K562 (cell line): ENCODE measurements at regions of chr12 and their contacts with region 1.

Region 1: DNA sequence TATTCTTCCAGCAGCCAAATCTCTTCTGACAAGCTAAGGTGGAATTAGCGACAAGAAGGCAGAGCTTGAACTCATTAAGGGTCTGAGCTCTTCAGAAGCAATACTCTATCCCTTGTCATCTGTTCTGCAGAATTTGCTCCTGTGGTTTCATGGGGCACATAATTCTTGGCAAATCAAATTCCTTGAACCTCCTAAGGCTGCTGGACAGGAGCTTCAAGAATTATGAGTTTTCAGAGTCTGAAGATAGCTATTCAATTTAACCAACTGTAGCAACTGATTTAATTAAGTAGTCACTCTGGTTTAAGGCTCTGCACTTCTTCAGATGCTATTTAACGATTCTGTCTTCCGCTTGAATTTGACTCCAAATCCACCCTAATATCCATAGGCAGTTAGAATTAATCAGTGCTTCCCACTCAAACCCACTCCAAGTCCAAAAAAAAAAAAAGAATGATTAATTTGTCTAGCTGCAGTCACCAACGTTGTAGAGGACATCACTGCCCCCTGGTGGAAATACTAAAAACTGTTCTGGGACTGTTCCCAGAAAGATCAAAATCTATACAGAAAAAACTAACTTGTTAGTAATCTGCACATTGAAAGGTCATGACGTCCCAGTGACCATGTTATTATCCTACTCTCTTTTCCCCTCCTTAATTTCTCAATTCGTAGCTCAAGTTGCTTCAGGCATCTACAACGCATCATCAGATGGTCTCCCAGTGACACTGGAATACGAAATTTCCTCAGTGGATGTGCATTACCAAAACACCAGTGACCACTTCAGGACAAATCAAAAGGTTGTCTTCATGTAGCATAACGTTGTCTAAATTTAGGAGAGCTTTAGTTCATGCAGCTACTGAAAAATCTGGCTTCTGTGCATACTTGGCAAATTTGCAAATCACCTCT is 169.8 kb downstream of the KIF21A start:
- DNase-seq: peak; percentile 28 to 59 (median 49)
- ATAC-seq: peak; percentile 81
- H3K4me3 ChIP-seq: no peak overlapping the region
- H3K27ac ChIP-seq: no peak overlapping the region
- H3K4me1 ChIP-seq: no peaks in the 10 kb centered on the region
- H3K27me3 ChIP-seq: no peaks in the 10 kb centered on the region; a peak in 1 of 5 replicates
- CTCF ChIP-seq: peak; percentile 50 to 82 (median 63); a peak in 5 of 6 replicates
- EP300 ChIP-seq: no peak
- POLR2A ChIP-seq: no peak
- RAD21 ChIP-seq: peak; percentile 41 to 67; a peak in 3 of 4 replicates

Region 2: GRCh38 chr12:38138225-38139221 is 1134.6 kb before region 1 on chr12:
- CTCF ChIA-PET with region 1: interaction called, 4 read pairs
- POLR2A ChIA-PET with region 1: no interaction called
- in situ Hi-C with region 1: loop called (anchors 10 kb)
- intact Hi-C with region 1: no loop called
- DNase-seq: peak; percentile 49 to 63 (median 53)
- ATAC-seq: peak; percentile 81
- H3K4me3 ChIP-seq: no peak overlapping the region
- H3K27ac ChIP-seq: no peak overlapping the region
- H3K4me1 ChIP-seq: peaks cover 0 to 4% of the 10 kb centered on the region in 2 experiments; a peak in 2 of 5 replicates
- H3K27me3 ChIP-seq: no peaks in the 10 kb centered on the region
- CTCF ChIP-seq: peak; percentile 57 to 90 (median 88)
- EP300 ChIP-seq: no peak
- POLR2A ChIP-seq: no peak
- RAD21 ChIP-seq: peak; percentile 42 to 73; a peak in 3 of 4 replicates

Region 3: GRCh38 chr12:38159591-38160317 is 1113.4 kb before region 1 on chr12:
- CTCF ChIA-PET with region 1: no interaction called
- POLR2A ChIA-PET with region 1: interaction called, 3 read pairs
- in situ Hi-C with region 1: no loop called
- intact Hi-C with region 1: loop called (anchors 5 kb)
- DNase-seq: no peak
- ATAC-seq: no peak
- H3K4me3 ChIP-seq: no peak overlapping the region
- H3K27ac ChIP-seq: no peak overlapping the region
- H3K4me1 ChIP-seq: peaks cover 0 to 33% of the 10 kb centered on the region in 2 experiments; a peak in 2 of 5 replicates
- H3K27me3 ChIP-seq: peaks cover 8 to 66% of the 10 kb centered on the region in 2 experiments; a peak in 3 of 5 replicates
- CTCF ChIP-seq: no peak
- EP300 ChIP-seq: no peak
- POLR2A ChIP-seq: no peak
- RAD21 ChIP-seq: no peak

Region 4: GRCh38 chr12:38324896-38325295 is 948.2 kb before region 1 on chr12:
- CTCF ChIA-PET with region 1: interaction called, 6 read pairs
- POLR2A ChIA-PET with region 1: no interaction called
- in situ Hi-C with region 1: loop called (anchors 25 kb)
- intact Hi-C with region 1: loop called (anchors 5 kb)
- DNase-seq: no peak
- ATAC-seq: no peak
- H3K4me3 ChIP-seq: no peak overlapping the region
- H3K27ac ChIP-seq: no peak overlapping the region
- H3K4me1 ChIP-seq: no peaks in the 10 kb centered on the region
- H3K27me3 ChIP-seq: no peaks in the 10 kb centered on the region
- CTCF ChIP-seq: no peak
- EP300 ChIP-seq: no peak
- POLR2A ChIP-seq: no peak
- RAD21 ChIP-seq: no peak

Region 5: DNA sequence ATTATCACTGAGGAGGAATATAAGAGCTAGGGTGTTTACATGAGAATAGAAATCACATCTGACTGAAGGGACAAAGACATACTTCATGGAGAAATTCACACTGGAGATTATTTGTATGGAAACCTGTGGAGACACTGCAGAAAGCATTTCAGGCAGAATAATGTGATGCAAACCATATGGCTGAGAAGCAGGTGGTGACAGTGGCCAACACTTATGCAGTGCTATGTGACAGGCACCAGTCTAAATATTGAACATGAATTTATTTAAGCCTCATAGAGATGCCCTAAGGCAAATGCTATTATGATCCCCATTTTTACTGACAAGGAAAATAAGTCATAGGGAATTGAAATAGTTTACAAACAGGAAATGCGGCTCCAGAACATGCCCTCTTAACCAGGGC is 940.3 kb before region 1 on chr12:
- CTCF ChIA-PET with region 1: interaction called, 6 read pairs
- POLR2A ChIA-PET with region 1: no interaction called
- in situ Hi-C with region 1: loop called (anchors 25 kb)
- intact Hi-C with region 1: loop called (anchors 5 kb)
- DNase-seq: no peak
- ATAC-seq: no peak
- H3K4me3 ChIP-seq: no peak overlapping the region
- H3K27ac ChIP-seq: no peak overlapping the region
- H3K4me1 ChIP-seq: no peaks in the 10 kb centered on the region
- H3K27me3 ChIP-seq: no peaks in the 10 kb centered on the region
- CTCF ChIP-seq: no peak
- EP300 ChIP-seq: no peak
- POLR2A ChIP-seq: no peak
- RAD21 ChIP-seq: no peak

Region 6: GRCh38 chr12:38906482-38907170 is 366.5 kb before region 1 on chr12:
- CTCF ChIA-PET with region 1: interaction called, 8 read pairs
- POLR2A ChIA-PET with region 1: no interaction called
- in situ Hi-C with region 1: no loop called
- intact Hi-C with region 1: loop called (anchors 10 kb)
- DNase-seq: peak; percentile 54 to 83 (median 67)
- ATAC-seq: peak; percentile 89
- H3K4me3 ChIP-seq: peak overlapping the region; percentile 58
- H3K27ac ChIP-seq: peak overlapping the region; percentile 70; the same call in 1 of the 3 replicates
- H3K4me1 ChIP-seq: peaks cover 0 to 17% of the 10 kb centered on the region in 2 experiments; a peak in 3 of 5 replicates
- H3K27me3 ChIP-seq: no peaks in the 10 kb centered on the region
- CTCF ChIP-seq: peak; percentile 61 to 77 (median 77)
- EP300 ChIP-seq: no peak
- POLR2A ChIP-seq: no peak
- RAD21 ChIP-seq: peak; percentile 60 to 68

Region 7: GRCh38 chr12:39237004-39237403 is 36.1 kb before region 1 on chr12:
- CTCF ChIA-PET with region 1: no interaction called
- POLR2A ChIA-PET with region 1: no interaction called
- in situ Hi-C with region 1: no loop called
- intact Hi-C with region 1: no loop called
- DNase-seq: no peak
- ATAC-seq: no peak
- H3K4me3 ChIP-seq: no peak overlapping the region
- H3K27ac ChIP-seq: no peak overlapping the region
- H3K4me1 ChIP-seq: no peaks in the 10 kb centered on the region
- H3K27me3 ChIP-seq: no peaks in the 10 kb centered on the region
- CTCF ChIP-seq: no peak
- EP300 ChIP-seq: no peak
- POLR2A ChIP-seq: no peak
- RAD21 ChIP-seq: no peak